GM12878 (cell line): ENCODE measurements at regions of chr11 and their contacts with region 1.

Region 1: GRCh38 chr11:128757235-128757711 is 63.4 kb downstream of the FLI1 start:
- DNase-seq: peak; percentile 93
- ATAC-seq: peak; percentile 89
- H3K4me3 ChIP-seq: no peak overlapping the region
- H3K27ac ChIP-seq: peak overlapping the region; percentile 87
- H3K4me1 ChIP-seq: peaks cover 31% of the 10 kb centered on the region
- H3K27me3 ChIP-seq: no peaks in the 10 kb centered on the region
- CTCF ChIP-seq: peak; percentile 81 to 94 (median 92)
- EP300 ChIP-seq: 0 out of 4 replicates have a peak, but pooled peaks of 1 of the 2 experiments have one; percentile 56
- POLR2A ChIP-seq: no peak
- RAD21 ChIP-seq: peak; percentile 90

Region 2: GRCh38 chr11:128290106-128290840 is 467.0 kb before region 1 on chr11:
- CTCF ChIA-PET with region 1: interaction called, 13 read pairs
- POLR2A ChIA-PET with region 1: no interaction called
- RAD21 ChIA-PET with region 1: interaction called, 21 read pairs
- SMC1A ChIA-PET with region 1: interaction called, 12 read pairs
- in situ Hi-C with region 1: loop called (anchors 5 kb)
- intact Hi-C with region 1: loop called (anchors 1 kb)
- DNase-seq: peak; percentile 80
- ATAC-seq: peak; percentile 92
- H3K4me3 ChIP-seq: peak overlapping the region; percentile 53
- H3K27ac ChIP-seq: peak overlapping the region; percentile 75
- H3K4me1 ChIP-seq: peaks cover 25% of the 10 kb centered on the region
- H3K27me3 ChIP-seq: no peaks in the 10 kb centered on the region
- CTCF ChIP-seq: peak; percentile 71 to 89 (median 85)
- EP300 ChIP-seq: peak; percentile 10 to 24; a peak in 1 of 4 replicates
- POLR2A ChIP-seq: peak; percentile 43
- RAD21 ChIP-seq: peak; percentile 99

Region 3: GRCh38 chr11:128603752-128604414 is 153.4 kb before region 1 on chr11:
- CTCF ChIA-PET with region 1: interaction called, 17 read pairs
- POLR2A ChIA-PET with region 1: no interaction called
- RAD21 ChIA-PET with region 1: interaction called, 18 read pairs
- SMC1A ChIA-PET with region 1: interaction called, 24 read pairs
- in situ Hi-C with region 1: no loop called
- intact Hi-C with region 1: loop called (anchors 1 kb)
- DNase-seq: peak; percentile 44
- ATAC-seq: peak; percentile 91
- H3K4me3 ChIP-seq: no peak overlapping the region
- H3K27ac ChIP-seq: no peak overlapping the region
- H3K4me1 ChIP-seq: peaks cover 6% of the 10 kb centered on the region
- H3K27me3 ChIP-seq: no peaks in the 10 kb centered on the region
- CTCF ChIP-seq: peak; percentile 5 to 68 (median 38); a peak in 5 of 6 replicates
- EP300 ChIP-seq: no peak
- POLR2A ChIP-seq: no peak
- RAD21 ChIP-seq: peak; percentile 87

Region 4: GRCh38 chr11:128686745-128687177 is 70.5 kb before region 1 on chr11:
- CTCF ChIA-PET with region 1: interaction called, 11 read pairs
- POLR2A ChIA-PET with region 1: no interaction called
- RAD21 ChIA-PET with region 1: interaction called, 3 read pairs
- SMC1A ChIA-PET with region 1: interaction called, 8 read pairs
- in situ Hi-C with region 1: no loop called
- intact Hi-C with region 1: no loop called
- DNase-seq: no peak
- ATAC-seq: peak; percentile 76
- H3K4me3 ChIP-seq: peak overlapping the region; percentile 35
- H3K27ac ChIP-seq: no peak overlapping the region
- H3K4me1 ChIP-seq: peaks cover 15% of the 10 kb centered on the region
- H3K27me3 ChIP-seq: peaks cover 12 to 24% of the 10 kb centered on the region in 2 experiments
- CTCF ChIP-seq: no peak
- EP300 ChIP-seq: no peak
- POLR2A ChIP-seq: no peak
- RAD21 ChIP-seq: no peak

Region 5: DNA sequence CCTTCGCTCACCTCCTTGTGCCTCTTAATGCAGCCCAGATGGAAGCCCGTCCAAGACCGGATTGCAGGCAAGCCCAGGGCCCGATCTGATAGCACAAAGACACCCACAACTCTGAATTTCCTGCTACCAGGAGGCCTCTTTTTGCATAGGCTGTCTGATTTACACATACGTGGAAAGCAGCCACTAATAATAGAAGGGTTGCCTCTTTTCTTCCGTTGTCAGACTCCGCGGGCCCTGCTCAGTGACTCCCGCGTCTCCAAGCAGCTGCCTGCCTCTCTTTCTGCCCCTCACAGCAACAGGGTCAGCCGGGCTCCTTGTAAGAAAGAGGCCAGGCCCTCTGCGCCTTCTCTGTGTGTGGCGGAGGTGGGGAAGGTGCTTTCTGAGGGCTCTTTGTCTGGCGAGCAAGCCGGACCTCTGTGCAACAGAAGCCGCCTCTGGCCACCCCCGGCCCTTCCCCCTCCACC is 36.7 kb before region 1 on chr11:
- CTCF ChIA-PET with region 1: interaction called, 15 read pairs
- POLR2A ChIA-PET with region 1: interaction called, 6 read pairs
- RAD21 ChIA-PET with region 1: interaction called, 13 read pairs
- SMC1A ChIA-PET with region 1: interaction called, 15 read pairs
- in situ Hi-C with region 1: no loop called
- intact Hi-C with region 1: no loop called
- DNase-seq: no peak
- ATAC-seq: peak; percentile 59
- H3K4me3 ChIP-seq: peak overlapping the region; percentile 78
- H3K27ac ChIP-seq: peak overlapping the region; percentile 94
- H3K4me1 ChIP-seq: peaks cover 85% of the 10 kb centered on the region
- H3K27me3 ChIP-seq: no peaks in the 10 kb centered on the region
- CTCF ChIP-seq: no peak
- EP300 ChIP-seq: no peak
- POLR2A ChIP-seq: peak; percentile 84
- RAD21 ChIP-seq: 0 out of 2 replicates have a peak, but pooled peaks have one; percentile 1

Region 6: DNA sequence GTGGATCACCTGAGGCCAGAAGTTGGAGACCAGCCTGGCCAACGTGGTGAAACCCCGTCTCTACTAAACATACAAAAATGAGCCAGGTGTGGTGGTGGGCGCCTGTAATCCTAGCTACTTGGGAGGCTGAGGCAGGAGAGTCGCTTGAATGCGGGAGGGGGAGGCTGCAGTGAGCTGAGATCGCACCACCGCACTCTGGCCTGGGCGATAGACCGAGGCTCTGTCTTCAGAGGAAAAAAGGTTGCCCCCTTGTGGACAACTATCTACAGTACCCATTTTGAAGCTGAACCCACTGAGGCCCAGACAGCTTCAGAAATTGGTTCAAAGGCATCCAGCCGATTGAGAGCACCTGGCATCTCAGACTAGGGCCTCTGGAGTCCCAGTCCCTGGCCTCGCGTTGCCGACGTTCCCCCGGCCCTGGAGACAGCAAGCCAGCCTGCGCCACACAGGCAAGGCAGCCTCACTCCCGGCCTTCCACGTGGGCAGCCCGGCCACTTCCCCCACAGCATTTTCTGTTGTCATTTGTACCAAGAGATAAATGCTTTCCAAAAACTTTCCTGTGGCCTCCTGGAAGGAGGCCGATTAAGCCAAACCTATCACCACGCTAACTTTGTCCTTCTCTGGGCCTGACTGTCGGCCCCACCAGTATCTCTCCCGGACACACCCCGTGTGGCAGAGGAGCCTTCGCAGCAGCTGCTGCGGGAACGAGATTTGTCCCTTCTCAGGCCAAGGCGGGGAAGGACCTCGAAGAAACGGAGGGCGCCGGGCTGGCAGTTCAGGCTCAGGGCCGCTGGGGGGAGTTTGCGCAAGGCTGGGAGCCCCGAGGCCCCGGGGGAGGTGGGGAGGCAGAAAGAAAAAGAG is 19.4 kb after region 1 on chr11:
- CTCF ChIA-PET with region 1: interaction called, 12 read pairs
- POLR2A ChIA-PET with region 1: no interaction called
- RAD21 ChIA-PET with region 1: no interaction called
- SMC1A ChIA-PET with region 1: interaction called, 16 read pairs
- in situ Hi-C with region 1: no loop called
- intact Hi-C with region 1: no loop called
- DNase-seq: no peak
- ATAC-seq: peak; percentile 88
- H3K4me3 ChIP-seq: no peak overlapping the region
- H3K27ac ChIP-seq: no peak overlapping the region
- H3K4me1 ChIP-seq: no peaks in the 10 kb centered on the region
- H3K27me3 ChIP-seq: no peaks in the 10 kb centered on the region
- CTCF ChIP-seq: peak; percentile 30 to 53 (median 34); a peak in 4 of 6 replicates
- EP300 ChIP-seq: no peak
- POLR2A ChIP-seq: no peak
- RAD21 ChIP-seq: peak; percentile 28; the same call in 1 of the 2 replicates